ENCODE measurements at regions of chr14 and their contacts with region 1.

Region 1: DNA sequence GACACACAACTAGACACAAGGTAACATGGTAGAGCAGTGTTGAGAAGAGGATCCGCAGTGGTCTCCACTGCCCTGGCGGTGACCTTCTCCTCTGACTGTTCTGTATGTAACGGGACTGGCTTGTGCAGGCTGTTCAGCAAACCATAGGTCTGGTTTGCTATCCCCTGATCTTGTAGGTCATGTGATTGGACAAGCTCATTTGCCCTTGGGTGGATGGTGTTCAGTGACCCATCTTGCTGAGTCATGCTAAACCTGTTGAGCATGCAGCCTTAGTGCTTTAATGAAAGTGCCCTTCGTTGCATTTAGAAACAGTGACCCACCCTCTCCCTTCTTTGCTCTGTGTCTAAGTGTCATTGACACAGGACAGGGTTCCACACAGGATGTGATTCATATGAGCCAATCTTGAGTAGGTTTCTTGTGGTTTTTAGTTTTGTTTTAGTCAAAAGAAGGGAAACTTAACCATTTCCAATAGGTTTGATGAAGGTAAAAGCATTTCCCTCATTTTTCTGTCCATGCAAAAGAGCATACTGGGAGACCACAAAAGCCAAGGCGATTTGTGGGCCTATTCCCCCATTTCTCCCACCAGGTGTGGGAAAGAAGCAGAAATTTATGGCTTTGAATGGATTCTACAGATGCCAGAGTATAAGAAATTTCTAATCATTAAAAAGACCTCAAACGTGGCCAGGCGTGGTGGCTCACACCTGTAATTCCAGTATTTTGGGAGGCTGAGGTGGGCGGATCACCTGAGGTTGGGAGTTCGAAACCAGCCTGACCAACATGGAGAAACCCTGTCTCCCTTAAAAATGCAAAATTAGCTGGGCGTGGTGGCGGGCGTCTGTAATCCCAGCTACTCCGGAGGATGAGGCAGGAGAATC is 32.6 kb upstream of the HIF1A start:
- DNase-seq: peak; percentile 73
- H3K4me3 Mint-ChIP-seq: peak overlapping the region; percentile 60
- H3K27ac Mint-ChIP-seq: peak overlapping the region; percentile 98
- H3K4me1 Mint-ChIP-seq: peaks cover 66% of the 10 kb centered on the region
- H3K27me3 Mint-ChIP-seq: no peaks in the 10 kb centered on the region

Region 2: GRCh38 chr14:60878536-60878935 is 784.1 kb before region 1 on chr14:
- CTCF ChIA-PET with region 1: no interaction called
- POLR2A ChIA-PET with region 1: no interaction called
- intact Hi-C with region 1: no loop called
- DNase-seq: no peak
- H3K4me3 Mint-ChIP-seq: no peak overlapping the region
- H3K27ac Mint-ChIP-seq: no peak overlapping the region
- H3K4me1 Mint-ChIP-seq: peaks cover 9% of the 10 kb centered on the region
- H3K27me3 Mint-ChIP-seq: no peaks in the 10 kb centered on the region

Region 3: DNA sequence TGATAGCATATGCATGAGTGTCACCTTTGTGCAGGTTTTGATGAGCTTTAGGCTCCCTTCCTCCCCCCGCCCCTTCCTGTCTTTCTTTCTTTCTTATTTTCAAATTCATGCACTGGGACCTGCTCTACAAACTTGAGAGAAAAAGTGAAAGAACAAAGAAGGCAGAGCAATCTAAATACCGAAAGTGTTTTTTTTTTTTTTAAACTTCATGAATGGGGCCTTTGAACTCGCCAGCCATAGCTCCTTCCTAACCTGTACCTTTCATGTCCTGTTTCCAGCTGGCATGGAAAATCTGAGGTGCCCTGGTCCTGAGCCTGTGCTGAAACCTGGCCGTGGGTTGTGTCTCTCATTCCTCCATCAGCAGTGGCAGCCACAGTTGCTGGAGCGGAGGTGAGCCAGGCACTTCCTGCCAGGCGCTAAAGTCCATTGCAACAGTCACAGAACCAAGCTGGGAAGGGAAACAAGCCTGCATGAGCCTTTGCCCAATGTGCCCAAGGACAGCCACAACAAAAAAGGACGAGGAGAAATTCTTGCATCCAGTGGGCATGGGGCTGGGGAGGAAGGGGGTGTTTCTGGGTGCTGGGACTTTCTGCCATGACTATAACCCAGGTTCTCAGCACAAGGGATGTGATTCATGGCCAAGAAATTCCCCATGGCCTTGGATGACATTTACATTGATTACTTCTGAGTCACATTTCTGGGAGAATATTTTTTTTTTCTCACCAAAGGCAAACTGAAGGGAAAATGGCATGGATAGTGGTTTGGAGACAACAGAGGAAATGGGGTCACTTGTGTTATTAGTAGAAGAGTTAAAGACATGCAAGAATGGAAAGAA is 484.2 kb before region 1 on chr14:
- CTCF ChIA-PET with region 1: no interaction called
- POLR2A ChIA-PET with region 1: no interaction called
- intact Hi-C with region 1: loop called (anchors 1 kb)
- DNase-seq: peak; percentile 81
- H3K4me3 Mint-ChIP-seq: peak overlapping the region; percentile 55
- H3K27ac Mint-ChIP-seq: peak overlapping the region; percentile 92
- H3K4me1 Mint-ChIP-seq: peaks cover 54% of the 10 kb centered on the region
- H3K27me3 Mint-ChIP-seq: no peaks in the 10 kb centered on the region

Region 4: DNA sequence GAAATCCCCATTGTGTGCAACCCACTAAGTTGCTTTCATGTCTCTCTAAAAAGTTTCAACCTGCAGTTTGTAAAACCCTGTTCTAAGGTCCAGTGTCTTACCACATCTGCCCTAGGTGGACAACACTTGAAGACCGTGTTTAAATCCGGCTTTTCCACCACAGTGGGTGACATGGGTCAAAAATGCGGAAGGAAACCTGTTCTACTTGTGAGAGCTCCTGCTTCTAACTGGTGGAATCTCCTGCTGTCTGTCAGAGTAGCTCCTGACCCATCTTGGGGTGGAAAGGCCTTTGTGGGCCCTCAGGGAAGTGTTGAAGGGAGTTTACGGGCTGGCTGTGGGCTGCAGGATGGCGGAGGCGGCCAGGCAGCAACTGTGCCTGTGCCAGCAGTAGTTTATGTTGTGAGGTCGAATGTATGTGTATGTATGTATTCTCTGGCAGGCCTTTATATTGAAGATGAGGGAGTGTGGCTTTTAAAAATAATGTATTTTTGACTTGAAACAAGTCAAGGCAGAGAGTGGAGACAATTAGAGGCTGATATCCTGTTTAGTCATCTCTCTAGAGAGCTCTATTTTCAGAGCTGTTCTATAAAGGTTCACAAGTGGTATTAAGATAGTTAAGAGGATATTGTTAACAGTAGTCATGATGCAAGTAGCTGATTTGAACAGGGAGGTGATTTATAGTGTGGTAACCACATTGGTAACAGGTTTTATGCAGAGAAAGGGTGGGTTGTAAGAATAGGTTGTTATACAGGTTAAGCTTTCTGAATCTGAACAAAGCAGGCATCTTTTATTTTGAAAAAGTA is 274.3 kb before region 1 on chr14:
- CTCF ChIA-PET with region 1: no interaction called
- POLR2A ChIA-PET with region 1: no interaction called
- intact Hi-C with region 1: loop called (anchors 5 kb)
- DNase-seq: peak; percentile 64
- H3K4me3 Mint-ChIP-seq: no peak overlapping the region
- H3K27ac Mint-ChIP-seq: no peak overlapping the region
- H3K4me1 Mint-ChIP-seq: peaks cover 14% of the 10 kb centered on the region
- H3K27me3 Mint-ChIP-seq: no peaks in the 10 kb centered on the region

Region 5: DNA sequence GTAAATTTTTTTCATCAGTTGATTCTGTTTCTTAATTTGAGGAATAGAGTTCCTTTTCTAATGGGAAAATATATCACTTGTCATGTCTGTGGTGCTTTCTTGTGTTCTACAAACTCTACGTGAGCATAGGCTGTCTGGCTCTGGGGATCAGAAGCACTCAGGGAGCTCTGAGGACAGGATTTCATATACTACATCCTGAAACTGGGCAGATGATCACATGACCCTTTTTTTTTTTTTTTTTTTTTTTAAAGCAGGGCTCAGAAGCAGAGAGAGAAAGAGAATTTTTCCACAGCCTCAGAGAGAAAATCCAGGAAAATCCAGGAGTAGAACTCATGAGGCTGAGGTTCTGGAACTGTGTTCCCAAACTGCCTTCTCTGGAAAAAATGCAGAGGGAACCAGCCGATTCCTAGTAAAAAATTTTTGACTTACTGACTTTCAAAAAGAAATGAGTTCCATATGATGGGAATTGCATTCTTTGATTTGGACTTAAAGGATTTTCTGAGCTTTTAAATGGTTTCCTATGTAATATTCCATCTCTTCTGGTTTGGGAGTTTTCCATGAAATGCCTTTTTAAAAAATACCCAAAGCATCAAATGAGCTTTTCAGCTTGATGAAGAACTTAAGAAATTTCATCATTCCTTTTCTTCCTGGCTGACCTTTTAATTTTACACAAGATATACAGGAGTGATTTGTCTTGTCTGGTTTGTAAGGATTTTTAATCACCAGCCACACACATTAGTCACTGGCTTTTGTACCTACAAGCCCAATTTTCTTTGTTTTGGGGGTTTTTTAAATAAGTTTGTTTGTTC is 150.4 kb before region 1 on chr14:
- CTCF ChIA-PET with region 1: interaction called, 3 read pairs
- POLR2A ChIA-PET with region 1: interaction called, 7 read pairs
- intact Hi-C with region 1: loop called (anchors 1 kb)
- DNase-seq: no peak
- H3K4me3 Mint-ChIP-seq: peak overlapping the region; percentile 51
- H3K27ac Mint-ChIP-seq: peak overlapping the region; percentile 98
- H3K4me1 Mint-ChIP-seq: peaks cover 95% of the 10 kb centered on the region
- H3K27me3 Mint-ChIP-seq: no peaks in the 10 kb centered on the region

Region 6: GRCh38 chr14:61598980-61599379 is 63.7 kb before region 1 on chr14:
- CTCF ChIA-PET with region 1: no interaction called
- POLR2A ChIA-PET with region 1: interaction called, 3 read pairs
- intact Hi-C with region 1: loop called (anchors 1 kb)
- DNase-seq: peak; percentile 54
- H3K4me3 Mint-ChIP-seq: no peak overlapping the region
- H3K27ac Mint-ChIP-seq: peak overlapping the region; percentile 65
- H3K4me1 Mint-ChIP-seq: peaks cover 48% of the 10 kb centered on the region
- H3K27me3 Mint-ChIP-seq: no peaks in the 10 kb centered on the region

Region 7: GRCh38 chr14:61703342-61704129 is 40.9 kb after region 1 on chr14:
- CTCF ChIA-PET with region 1: interaction called, 3 read pairs
- POLR2A ChIA-PET with region 1: interaction called, 40 read pairs
- intact Hi-C with region 1: loop called (anchors 1 kb)
- DNase-seq: no peak
- H3K4me3 Mint-ChIP-seq: peak overlapping the region; percentile 57
- H3K27ac Mint-ChIP-seq: peak overlapping the region; percentile 79
- H3K4me1 Mint-ChIP-seq: peaks cover 86% of the 10 kb centered on the region
- H3K27me3 Mint-ChIP-seq: no peaks in the 10 kb centered on the region